K562 (cell line): ENCODE measurements at regions of chr5 and their contacts with region 1.

Region 1: DNA sequence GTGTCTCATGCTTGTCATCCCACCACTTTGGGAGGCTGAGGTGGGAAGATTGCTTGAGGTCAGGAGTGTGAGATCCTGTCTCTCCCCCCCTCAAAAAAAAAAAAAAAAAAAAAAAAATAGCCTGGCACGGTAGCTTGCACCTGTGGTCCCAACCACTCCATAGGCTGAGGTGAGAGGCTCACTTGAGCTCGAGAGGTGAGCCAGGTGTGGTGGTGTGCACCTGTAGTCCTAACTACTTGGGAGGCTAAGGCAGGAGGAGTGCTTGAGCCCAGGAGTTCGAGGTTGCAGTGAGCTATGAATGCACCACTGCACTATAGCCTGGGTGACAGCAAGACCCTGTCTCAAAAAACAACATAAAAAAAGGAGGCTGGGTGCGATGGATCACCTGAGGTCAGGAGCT is 9.7 kb upstream of the ETF1 start:
- DNase-seq: no peak
- ATAC-seq: peak; percentile 13
- H3K4me3 ChIP-seq: no peak overlapping the region
- H3K27ac ChIP-seq: no peak overlapping the region
- H3K4me1 ChIP-seq: no peaks in the 10 kb centered on the region
- H3K27me3 ChIP-seq: no peaks in the 10 kb centered on the region
- CTCF ChIP-seq: no peak
- EP300 ChIP-seq: no peak
- POLR2A ChIP-seq: peak; percentile 8; the same call in 1 of the 2 replicates
- RAD21 ChIP-seq: no peak

Region 2: DNA sequence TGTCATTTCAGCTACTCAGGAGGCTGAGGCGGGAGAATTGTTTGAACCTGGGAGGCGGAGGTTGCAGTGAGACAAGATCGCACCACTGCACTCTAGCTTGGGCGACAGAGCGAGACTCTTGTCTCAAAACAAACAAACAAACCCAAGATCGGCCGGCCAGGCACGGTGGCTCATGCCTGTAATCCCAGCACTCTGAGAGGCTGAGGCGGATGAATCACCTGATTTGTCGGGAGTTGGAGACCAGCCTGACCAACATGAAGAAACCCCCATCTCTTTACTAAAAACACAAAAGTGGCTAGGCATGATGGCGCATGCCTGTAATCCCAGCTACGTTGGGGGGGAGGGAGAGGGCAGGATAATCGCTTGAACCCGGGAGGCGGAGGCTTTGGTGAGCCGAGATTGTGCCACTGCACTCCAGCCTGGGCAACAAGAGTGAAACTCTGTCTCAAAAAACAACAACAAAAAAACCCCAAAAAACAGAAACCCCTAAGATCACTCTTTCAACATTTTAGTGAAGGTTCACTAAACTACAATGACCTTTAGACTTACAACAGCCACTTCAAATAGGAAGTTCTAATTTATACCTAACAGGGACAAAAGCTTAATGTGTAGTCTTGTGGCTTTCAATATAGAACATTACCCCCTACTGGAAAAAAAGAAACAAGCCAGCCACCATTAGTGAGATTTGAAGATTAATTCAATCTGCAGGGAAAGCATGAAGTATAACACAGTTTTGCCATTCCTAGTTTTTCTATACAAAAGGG is 15.5 kb after region 1 on chr5:
- CTCF ChIA-PET with region 1: no interaction called
- POLR2A ChIA-PET with region 1: interaction called, 73 read pairs
- in situ Hi-C with region 1: no loop called
- intact Hi-C with region 1: no loop called
- DNase-seq: no peak
- ATAC-seq: no peak
- H3K4me3 ChIP-seq: no peak overlapping the region
- H3K27ac ChIP-seq: no peak overlapping the region
- H3K4me1 ChIP-seq: peaks cover 0 to 1% of the 10 kb centered on the region in 2 experiments; a peak in 3 of 5 replicates
- H3K27me3 ChIP-seq: no peaks in the 10 kb centered on the region
- CTCF ChIP-seq: no peak; a peak in 1 of 6 replicates
- EP300 ChIP-seq: no peak
- POLR2A ChIP-seq: peak; percentile 26; the same call in 1 of the 2 replicates
- RAD21 ChIP-seq: no peak

Region 3: DNA sequence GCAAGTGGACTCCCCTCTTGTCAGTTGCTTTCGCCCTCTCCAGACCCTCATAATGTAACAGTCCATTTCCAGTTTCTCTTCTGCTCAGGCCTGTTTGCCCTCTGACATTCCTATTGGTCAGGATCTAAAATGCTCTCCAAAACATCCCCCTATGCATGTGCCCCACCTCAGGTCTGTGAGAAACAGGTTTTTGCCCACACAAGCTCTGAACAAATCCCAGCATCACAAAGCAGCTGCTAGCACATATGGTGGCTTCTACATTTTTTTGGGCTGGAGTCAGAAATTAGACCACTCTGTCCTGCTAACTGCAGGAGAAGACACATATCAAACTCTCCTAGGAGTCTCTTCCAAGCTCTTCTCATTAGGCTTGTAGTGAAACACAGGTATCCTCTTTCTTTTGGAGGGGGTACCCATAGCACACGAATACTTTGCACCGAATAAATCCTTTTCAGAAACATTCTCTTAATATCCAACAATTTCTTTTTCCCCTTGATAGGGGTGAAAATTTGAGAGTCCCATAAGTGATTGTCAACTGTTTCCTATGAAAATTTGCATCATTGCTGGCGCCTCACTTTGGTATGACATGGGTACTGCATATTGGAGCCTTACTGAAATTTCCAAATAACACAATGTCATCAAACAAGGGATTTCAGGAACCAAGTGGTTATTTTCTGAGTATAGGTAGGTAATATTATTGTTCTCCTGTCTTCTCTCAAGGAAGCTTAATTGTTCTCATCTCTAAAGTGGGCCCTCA is 41.8 kb after region 1 on chr5:
- CTCF ChIA-PET with region 1: no interaction called
- POLR2A ChIA-PET with region 1: no interaction called
- in situ Hi-C with region 1: no loop called
- intact Hi-C with region 1: no loop called
- DNase-seq: no peak
- ATAC-seq: peak; percentile 59; the same call in 2 of the 3 replicates
- H3K4me3 ChIP-seq: no peak overlapping the region
- H3K27ac ChIP-seq: no peak overlapping the region
- H3K4me1 ChIP-seq: no peaks in the 10 kb centered on the region
- H3K27me3 ChIP-seq: peaks cover 9 to 34% of the 10 kb centered on the region in 2 experiments; a peak in 4 of 5 replicates
- CTCF ChIP-seq: peak; percentile 23 to 51 (median 50); a peak in 5 of 6 replicates
- EP300 ChIP-seq: no peak
- POLR2A ChIP-seq: no peak
- RAD21 ChIP-seq: peak in 1 of 2 experiments; percentile 21; a peak in 1 of 4 replicates

Region 4: GRCh38 chr5:138809391-138809790 is 256.7 kb after region 1 on chr5:
- CTCF ChIA-PET with region 1: no interaction called
- POLR2A ChIA-PET with region 1: no interaction called
- in situ Hi-C with region 1: no loop called
- intact Hi-C with region 1: no loop called
- DNase-seq: no peak
- ATAC-seq: no peak
- H3K4me3 ChIP-seq: no peak overlapping the region
- H3K27ac ChIP-seq: no peak overlapping the region
- H3K4me1 ChIP-seq: no peaks in the 10 kb centered on the region
- H3K27me3 ChIP-seq: no peaks in the 10 kb centered on the region
- CTCF ChIP-seq: no peak
- EP300 ChIP-seq: no peak
- POLR2A ChIP-seq: no peak
- RAD21 ChIP-seq: no peak